ENCODE measurements at regions of chr6 and their contacts with region 1.

Region 1: DNA sequence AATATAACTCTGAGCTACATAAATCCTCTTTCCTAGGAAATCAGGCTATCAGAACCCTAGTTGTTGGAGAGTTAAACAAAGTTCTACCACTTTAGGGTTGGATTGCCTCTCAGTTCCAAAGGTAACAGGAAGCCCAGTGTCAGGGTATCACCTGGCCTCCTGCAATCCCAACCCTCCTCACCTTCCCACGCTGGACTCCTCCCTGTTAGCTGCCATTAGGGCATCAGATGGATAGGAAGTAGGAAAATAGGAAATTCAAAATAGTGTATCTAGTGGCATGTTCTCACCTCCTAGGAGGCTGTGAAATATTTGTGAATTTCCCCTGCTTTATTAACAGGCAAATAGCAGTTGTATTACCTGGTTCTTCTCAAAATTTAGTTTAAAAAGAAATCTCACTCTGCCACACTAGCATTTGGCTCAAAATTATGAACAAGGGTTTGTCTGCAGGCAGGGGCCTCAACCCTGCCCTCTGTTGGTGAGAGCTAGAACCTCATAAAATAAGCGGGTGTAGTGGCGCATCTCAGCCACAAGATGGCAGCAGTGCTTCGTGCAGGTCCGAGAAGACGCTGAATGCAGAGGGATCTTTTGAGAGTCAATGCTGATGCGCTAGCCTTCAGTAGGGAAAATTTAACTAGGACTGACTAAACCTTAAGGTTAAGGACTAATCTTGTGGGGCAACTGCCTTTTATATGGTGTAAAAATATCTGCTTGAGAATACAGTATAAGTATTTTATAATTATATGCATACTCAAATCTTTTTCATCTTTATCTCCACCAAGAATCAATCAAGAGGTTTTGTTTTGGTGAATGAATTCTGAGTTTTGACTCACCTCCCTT is 209.8 kb upstream of the KCNQ5 start:
- DNase-seq: no peak
- H3K4me3 ChIP-seq: no peak overlapping the region
- H3K27ac ChIP-seq: no peak overlapping the region
- H3K4me1 ChIP-seq: no peaks in the 10 kb centered on the region
- H3K27me3 ChIP-seq: no peaks in the 10 kb centered on the region
- CTCF ChIP-seq: peak in 2 of 3 experiments; percentile 100
- EP300 ChIP-seq: no peak
- POLR2A ChIP-seq: no peak

Region 2: DNA sequence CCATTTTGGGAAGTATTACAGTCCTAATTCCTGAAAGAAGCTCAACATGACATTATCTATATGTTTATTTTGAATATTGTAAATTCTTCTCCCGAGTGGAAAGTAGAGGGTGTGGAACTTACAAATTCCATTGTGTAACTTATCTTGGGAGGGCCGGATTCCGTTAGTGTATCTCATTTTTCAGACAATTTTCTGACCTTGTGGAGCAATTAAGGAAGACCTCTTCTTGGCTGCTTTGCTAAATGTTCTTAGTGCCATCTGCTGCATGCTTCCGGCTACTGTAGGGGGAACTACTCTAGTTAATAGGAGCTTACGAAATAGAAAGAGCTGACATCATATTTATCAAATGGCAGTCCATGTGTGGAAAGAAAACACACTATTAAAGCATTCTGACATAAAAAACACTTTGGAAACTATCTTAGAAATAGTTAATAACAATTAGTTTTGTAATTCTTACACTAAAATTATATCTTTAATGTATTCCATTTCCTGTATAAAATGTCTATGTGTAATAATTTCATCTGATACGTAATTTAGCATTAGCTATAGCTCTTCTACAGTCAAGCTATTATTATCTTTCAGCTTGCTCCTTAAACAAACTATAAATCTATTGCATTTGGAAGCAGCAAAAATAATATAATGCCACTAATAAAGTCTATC is 168.3 kb after region 1 on chr6:
- intact Hi-C with region 1: loop called (anchors 5 kb)
- DNase-seq: no peak
- H3K4me3 ChIP-seq: no peak overlapping the region
- H3K27ac ChIP-seq: no peak overlapping the region
- H3K4me1 ChIP-seq: no peaks in the 10 kb centered on the region
- H3K27me3 ChIP-seq: no peaks in the 10 kb centered on the region
- CTCF ChIP-seq: peak; percentile 24 to 49 (median 29)
- EP300 ChIP-seq: no peak
- POLR2A ChIP-seq: no peak

Region 3: GRCh38 chr6:73129653-73130443 is 717.8 kb after region 1 on chr6:
- intact Hi-C with region 1: loop called (anchors 2 kb)
- DNase-seq: peak; percentile 94
- H3K4me3 ChIP-seq: peak overlapping the region in 2 of 4 donors; percentile 30 to 31
- H3K27ac ChIP-seq: no peak overlapping the region
- H3K4me1 ChIP-seq: peaks cover 0 to 10% (median 9%) of the 10 kb centered on the region in 4 donors
- H3K27me3 ChIP-seq: no peaks in the 10 kb centered on the region
- CTCF ChIP-seq: peak; percentile 78 to 97 (median 93)
- EP300 ChIP-seq: no peak
- POLR2A ChIP-seq: no peak

Region 4: GRCh38 chr6:73180763-73181619 is 768.9 kb after region 1 on chr6:
- intact Hi-C with region 1: loop called (anchors 5 kb)
- DNase-seq: no peak
- H3K4me3 ChIP-seq: peak overlapping the region; percentile 32 to 51 (median 36)
- H3K27ac ChIP-seq: no peak overlapping the region
- H3K4me1 ChIP-seq: peaks cover 5 to 7% (median 5%) of the 10 kb centered on the region in 4 donors
- H3K27me3 ChIP-seq: no peaks in the 10 kb centered on the region
- CTCF ChIP-seq: peak; percentile 67 to 84 (median 83)
- EP300 ChIP-seq: no peak
- POLR2A ChIP-seq: no peak

Region 5: GRCh38 chr6:73329201-73329600 is 917.1 kb after region 1 on chr6:
- intact Hi-C with region 1: loop called (anchors 10 kb)
- DNase-seq: no peak
- H3K4me3 ChIP-seq: no peak overlapping the region
- H3K27ac ChIP-seq: no peak overlapping the region
- H3K4me1 ChIP-seq: no peaks in the 10 kb centered on the region
- H3K27me3 ChIP-seq: peaks cover 0 to 6% (median 0%) of the 10 kb centered on the region in 4 donors
- CTCF ChIP-seq: no peak
- EP300 ChIP-seq: no peak
- POLR2A ChIP-seq: no peak

Region 6: GRCh38 chr6:73461537-73462350 is 1049.7 kb after region 1 on chr6 and contains the start of gene MTO1:
- intact Hi-C with region 1: no loop called
- DNase-seq: peak; percentile 97
- H3K4me3 ChIP-seq: peak within 1 kb of the TSS; percentile 72 to 95 (median 90)
- H3K27ac ChIP-seq: peak within 1 kb of the TSS; percentile 87 to 97 (median 95)
- H3K4me1 ChIP-seq: peaks cover 20 to 36% (median 34%) of the 10 kb centered on the region in 4 donors
- H3K27me3 ChIP-seq: no peaks in the 10 kb centered on the region
- CTCF ChIP-seq: no peak
- EP300 ChIP-seq: no peak
- POLR2A ChIP-seq: no peak
- total RNA-seq, gene MTO1: 15.2 to 38.6 (median 25.7) TPM

Measured in esophagus muscularis mucosa (tissue), 4 donors.